ENCODE measurements at regions of chr6 and their contacts with region 1.

Region 1: GRCh38 chr6:35139908-35140655 is 1.1 kb downstream of the TCP11 start:
- DNase-seq: peak; percentile 74
- ATAC-seq: peak; percentile 19; the same call in 1 of the 2 replicates
- H3K4me3 ChIP-seq: no peak overlapping the region
- H3K27ac ChIP-seq: no peak overlapping the region
- H3K4me1 ChIP-seq: peaks cover 13% of the 10 kb centered on the region
- H3K27me3 ChIP-seq: no peaks in the 10 kb centered on the region
- CTCF ChIP-seq: peak; percentile 95

Region 2: GRCh38 chr6:34791701-34792235 is 348.3 kb before region 1 on chr6 and contains the start of gene BLTP3A:
- CTCF ChIA-PET with region 1: no interaction called
- POLR2A ChIA-PET with region 1: no interaction called
- intact Hi-C with region 1: loop called (anchors 5 kb)
- DNase-seq: peak; percentile 80
- ATAC-seq: peak; percentile 76
- H3K4me3 ChIP-seq: peak within 1 kb of the TSS; percentile 86
- H3K27ac ChIP-seq: peak within 1 kb of the TSS; percentile 41
- H3K4me1 ChIP-seq: peaks cover 25% of the 10 kb centered on the region
- H3K27me3 ChIP-seq: no peaks in the 10 kb centered on the region
- CTCF ChIP-seq: 0 out of 2 replicates have a peak, but pooled peaks have one; percentile 12
- total RNA-seq, gene BLTP3A: 10.6 and 11.1 TPM in 2 replicates

Region 3: GRCh38 chr6:34887753-34888513 is 252.1 kb before region 1 on chr6 and contains the start of gene TAF11:
- CTCF ChIA-PET with region 1: no interaction called
- POLR2A ChIA-PET with region 1: no interaction called
- intact Hi-C with region 1: loop called (anchors 5 kb)
- DNase-seq: peak; percentile 97
- ATAC-seq: peak; percentile 79
- H3K4me3 ChIP-seq: peak within 1 kb of the TSS; percentile 90
- H3K27ac ChIP-seq: peak within 1 kb of the TSS; percentile 48
- H3K4me1 ChIP-seq: peaks cover 12% of the 10 kb centered on the region
- H3K27me3 ChIP-seq: no peaks in the 10 kb centered on the region
- CTCF ChIP-seq: no peak
- total RNA-seq, gene TAF11: 24.1 and 28.9 TPM in 2 replicates

Region 4: GRCh38 chr6:34953061-34954025 is 186.7 kb before region 1 on chr6:
- CTCF ChIA-PET with region 1: no interaction called
- POLR2A ChIA-PET with region 1: no interaction called
- intact Hi-C with region 1: no loop called
- DNase-seq: peak; percentile 92
- ATAC-seq: peak; percentile 98
- H3K4me3 ChIP-seq: no peak overlapping the region
- H3K27ac ChIP-seq: peak overlapping the region; percentile 59
- H3K4me1 ChIP-seq: peaks cover 21% of the 10 kb centered on the region
- H3K27me3 ChIP-seq: no peaks in the 10 kb centered on the region
- CTCF ChIP-seq: no peak

Region 5: GRCh38 chr6:34986845-34987246 is 153.2 kb before region 1 on chr6:
- CTCF ChIA-PET with region 1: interaction called, 9 read pairs
- POLR2A ChIA-PET with region 1: no interaction called
- intact Hi-C with region 1: loop called (anchors 1 kb)
- DNase-seq: peak; percentile 75
- ATAC-seq: peak; percentile 62
- H3K4me3 ChIP-seq: no peak overlapping the region
- H3K27ac ChIP-seq: no peak overlapping the region
- H3K4me1 ChIP-seq: peaks cover 6% of the 10 kb centered on the region; the same call in 1 of the 2 replicates
- H3K27me3 ChIP-seq: no peaks in the 10 kb centered on the region
- CTCF ChIP-seq: peak; percentile 93

Measured in PC-3 (cell line).